ENCODE measurements at regions of chr21 and their contacts with region 1.

Region 1: DNA sequence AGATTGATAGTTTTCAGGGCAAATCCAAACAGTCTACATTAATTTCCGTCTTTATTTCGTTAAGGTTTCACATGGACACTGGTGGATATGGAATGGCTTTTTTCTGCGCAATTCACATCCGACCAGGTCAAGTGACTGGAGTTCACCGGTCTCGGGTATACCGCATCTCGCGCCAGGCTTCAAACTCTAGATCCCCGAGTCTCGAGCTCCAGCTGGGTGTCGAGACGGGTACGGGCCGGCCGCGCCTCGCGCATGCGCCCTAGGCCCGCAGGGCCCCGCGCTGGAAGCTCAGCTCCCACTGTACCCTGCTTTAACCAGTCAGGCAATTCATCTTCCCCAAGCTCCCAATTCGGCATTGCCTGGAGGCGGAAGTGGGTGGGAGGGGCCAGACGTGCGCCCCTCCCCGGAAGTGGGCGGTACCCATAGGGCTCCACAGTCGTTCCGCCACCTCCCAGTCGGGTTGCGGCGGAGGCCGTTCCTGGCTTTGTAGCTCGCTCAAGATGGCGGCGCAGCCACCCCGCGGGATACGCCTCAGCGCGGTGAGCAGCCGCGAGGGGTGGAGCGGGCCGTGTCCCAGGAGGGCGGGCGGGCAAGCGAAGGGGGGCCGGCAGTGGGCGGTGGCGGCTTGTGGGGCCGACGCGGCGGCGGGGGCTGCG is at the start of gene MORC3:
- DNase-seq: peak; percentile 99
- H3K4me3 Mint-ChIP-seq: peak within 1 kb of the TSS; percentile 88
- H3K27ac Mint-ChIP-seq: peak within 1 kb of the TSS; percentile 96
- H3K4me1 Mint-ChIP-seq: peaks cover 26% of the 10 kb centered on the region
- H3K27me3 Mint-ChIP-seq: peaks cover 3% of the 10 kb centered on the region
- total RNA-seq, gene MORC3: 43.6 to 44.3 TPM

Region 2: DNA sequence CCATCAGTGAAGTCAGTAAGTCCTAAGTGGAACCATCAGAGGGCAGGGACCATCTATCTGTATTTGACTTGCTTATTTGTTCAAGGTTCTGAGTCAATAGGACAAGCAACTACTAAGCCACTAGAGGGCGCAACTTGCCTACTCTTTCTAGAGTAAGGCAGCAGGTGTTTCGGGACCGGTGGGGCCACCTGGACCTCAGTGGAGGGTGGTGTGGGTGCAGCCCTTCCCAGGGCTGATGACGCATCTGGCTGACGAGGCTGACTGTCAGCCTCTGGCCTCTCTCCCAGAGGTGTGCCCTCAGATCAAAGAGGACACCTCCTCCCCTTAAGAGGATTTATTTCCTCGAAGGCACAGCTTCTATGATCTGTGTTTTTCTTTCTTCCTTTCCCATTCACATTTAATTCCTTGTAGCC is 178.4 kb before region 1 on chr21:
- CTCF ChIA-PET with region 1: interaction called, 8 read pairs
- POLR2A ChIA-PET with region 1: interaction called, 52 read pairs
- DNase-seq: peak; percentile 87
- H3K4me3 Mint-ChIP-seq: no peak overlapping the region
- H3K27ac Mint-ChIP-seq: peak overlapping the region; percentile 44
- H3K4me1 Mint-ChIP-seq: peaks cover 51% of the 10 kb centered on the region
- H3K27me3 Mint-ChIP-seq: no peaks in the 10 kb centered on the region

Region 3: DNA sequence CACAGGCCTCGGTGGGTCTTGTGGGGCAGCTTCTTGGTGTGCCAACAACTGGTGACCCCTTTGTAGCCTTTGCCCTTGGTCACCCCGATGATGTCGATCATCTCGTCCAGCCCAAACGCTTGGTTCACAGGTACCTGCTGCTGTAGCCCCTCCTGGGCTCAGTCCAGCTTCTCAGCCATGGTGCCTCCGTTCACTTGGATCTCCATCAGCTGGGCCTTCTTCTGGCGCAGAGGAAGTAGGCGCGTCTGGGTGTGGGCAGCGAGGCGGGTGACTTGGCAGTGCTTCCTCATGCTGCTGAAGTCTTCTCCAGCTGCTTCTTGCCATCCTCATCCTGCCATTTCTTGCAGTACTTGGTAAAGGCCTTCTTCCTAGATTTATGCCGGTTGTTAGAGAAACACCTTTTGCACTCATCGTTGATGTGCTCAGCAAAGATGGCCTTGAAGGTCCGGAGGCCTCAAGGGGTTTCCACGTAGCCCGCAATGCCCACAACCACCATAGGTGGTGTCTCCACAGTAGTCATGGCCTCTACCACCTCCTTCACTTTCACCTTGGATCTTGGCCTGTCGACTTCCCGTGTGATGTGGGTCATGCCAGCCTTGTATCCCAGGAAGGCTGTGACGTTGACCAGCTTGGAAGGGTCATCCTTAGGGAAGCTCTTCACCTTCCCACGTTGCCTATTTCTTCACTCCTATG is 150.3 kb before region 1 on chr21:
- CTCF ChIA-PET with region 1: interaction called, 18 read pairs
- POLR2A ChIA-PET with region 1: interaction called, 19 read pairs
- DNase-seq: no peak
- H3K4me3 Mint-ChIP-seq: no peak overlapping the region
- H3K27ac Mint-ChIP-seq: no peak overlapping the region
- H3K4me1 Mint-ChIP-seq: peaks cover 20% of the 10 kb centered on the region
- H3K27me3 Mint-ChIP-seq: no peaks in the 10 kb centered on the region

Region 4: GRCh38 chr21:36288651-36289243 is 31.1 kb before region 1 on chr21:
- CTCF ChIA-PET with region 1: interaction called, 24 read pairs
- POLR2A ChIA-PET with region 1: interaction called, 109 read pairs
- DNase-seq: no peak
- H3K4me3 Mint-ChIP-seq: peak overlapping the region; percentile 2
- H3K27ac Mint-ChIP-seq: peak overlapping the region; percentile 47
- H3K4me1 Mint-ChIP-seq: peaks cover 20% of the 10 kb centered on the region
- H3K27me3 Mint-ChIP-seq: no peaks in the 10 kb centered on the region

Region 5: GRCh38 chr21:36337099-36337509 is 17.2 kb after region 1 on chr21:
- CTCF ChIA-PET with region 1: interaction called, 28 read pairs
- POLR2A ChIA-PET with region 1: interaction called, 11 read pairs
- DNase-seq: no peak
- H3K4me3 Mint-ChIP-seq: no peak overlapping the region
- H3K27ac Mint-ChIP-seq: no peak overlapping the region
- H3K4me1 Mint-ChIP-seq: peaks cover 10% of the 10 kb centered on the region
- H3K27me3 Mint-ChIP-seq: no peaks in the 10 kb centered on the region

Region 6: GRCh38 chr21:36589355-36589971 is 269.6 kb after region 1 on chr21:
- CTCF ChIA-PET with region 1: no interaction called
- POLR2A ChIA-PET with region 1: no interaction called
- DNase-seq: peak; percentile 24
- H3K4me3 Mint-ChIP-seq: no peak overlapping the region
- H3K27ac Mint-ChIP-seq: no peak overlapping the region
- H3K4me1 Mint-ChIP-seq: no peaks in the 10 kb centered on the region
- H3K27me3 Mint-ChIP-seq: peaks cover 2% of the 10 kb centered on the region

Measured in activated CD4-positive, alpha-beta memory T cell treated with anti-CD3 and anti-CD28 coated beads, Interleukin-2, amount 10 ng/mL, durations not matched to agents 7 days and 5 days (primary cell).